Activated naive CD4-positive, alpha-beta T cell treated with anti-CD3 and anti-CD28 coated beads for 36 hours (primary cell): ENCODE measurements at regions of chr4 and their contacts with region 1.

Region 1: GRCh38 chr4:51842554-51843308 is at the start of gene DCUN1D4:
- DNase-seq: peak; percentile 99
- H3K4me3 Mint-ChIP-seq: peak within 1 kb of the TSS; percentile 91
- H3K27ac Mint-ChIP-seq: peak within 1 kb of the TSS; percentile 87
- H3K4me1 Mint-ChIP-seq: peaks cover 15% of the 10 kb centered on the region
- H3K27me3 Mint-ChIP-seq: no peaks in the 10 kb centered on the region
- total RNA-seq, gene DCUN1D4: 27.7 to 28.2 TPM

Region 2: GRCh38 chr4:51831133-51831532 is 11.6 kb before region 1 on chr4:
- CTCF ChIA-PET with region 1: interaction called, 13 read pairs
- intact Hi-C with region 1: no loop called
- DNase-seq: peak; percentile 84
- H3K4me3 Mint-ChIP-seq: no peak overlapping the region
- H3K27ac Mint-ChIP-seq: no peak overlapping the region
- H3K4me1 Mint-ChIP-seq: no peaks in the 10 kb centered on the region
- H3K27me3 Mint-ChIP-seq: peaks cover 6% of the 10 kb centered on the region

Region 3: GRCh38 chr4:51853027-51853682 is 10.4 kb after region 1 on chr4:
- CTCF ChIA-PET with region 1: no interaction called
- intact Hi-C with region 1: loop called (anchors 1 kb)
- DNase-seq: no peak
- H3K4me3 Mint-ChIP-seq: no peak overlapping the region
- H3K27ac Mint-ChIP-seq: no peak overlapping the region
- H3K4me1 Mint-ChIP-seq: peaks cover 45% of the 10 kb centered on the region
- H3K27me3 Mint-ChIP-seq: no peaks in the 10 kb centered on the region

Region 4: DNA sequence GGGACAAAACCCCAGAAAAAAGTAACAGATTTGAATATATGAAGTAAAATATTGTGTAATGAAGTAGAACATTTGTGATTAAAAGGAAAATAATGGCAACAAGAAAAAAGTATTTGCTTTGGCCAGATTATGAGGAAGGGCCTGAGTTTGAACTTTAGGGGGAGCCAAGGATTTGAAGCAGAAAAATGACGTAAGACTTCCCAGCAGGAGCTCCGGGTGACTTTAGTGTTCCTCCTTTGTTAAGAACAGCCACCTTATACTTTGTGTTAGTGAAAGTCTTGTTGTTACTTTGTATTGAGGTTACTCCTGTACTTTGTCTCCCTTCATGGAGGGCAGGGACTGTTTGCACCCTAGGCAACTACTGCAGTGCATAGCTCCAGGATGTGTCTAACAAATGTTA is 41.3 kb after region 1 on chr4:
- CTCF ChIA-PET with region 1: no interaction called
- intact Hi-C with region 1: no loop called
- DNase-seq: no peak
- H3K4me3 Mint-ChIP-seq: no peak overlapping the region
- H3K27ac Mint-ChIP-seq: no peak overlapping the region
- H3K4me1 Mint-ChIP-seq: no peaks in the 10 kb centered on the region
- H3K27me3 Mint-ChIP-seq: no peaks in the 10 kb centered on the region

Region 5: DNA sequence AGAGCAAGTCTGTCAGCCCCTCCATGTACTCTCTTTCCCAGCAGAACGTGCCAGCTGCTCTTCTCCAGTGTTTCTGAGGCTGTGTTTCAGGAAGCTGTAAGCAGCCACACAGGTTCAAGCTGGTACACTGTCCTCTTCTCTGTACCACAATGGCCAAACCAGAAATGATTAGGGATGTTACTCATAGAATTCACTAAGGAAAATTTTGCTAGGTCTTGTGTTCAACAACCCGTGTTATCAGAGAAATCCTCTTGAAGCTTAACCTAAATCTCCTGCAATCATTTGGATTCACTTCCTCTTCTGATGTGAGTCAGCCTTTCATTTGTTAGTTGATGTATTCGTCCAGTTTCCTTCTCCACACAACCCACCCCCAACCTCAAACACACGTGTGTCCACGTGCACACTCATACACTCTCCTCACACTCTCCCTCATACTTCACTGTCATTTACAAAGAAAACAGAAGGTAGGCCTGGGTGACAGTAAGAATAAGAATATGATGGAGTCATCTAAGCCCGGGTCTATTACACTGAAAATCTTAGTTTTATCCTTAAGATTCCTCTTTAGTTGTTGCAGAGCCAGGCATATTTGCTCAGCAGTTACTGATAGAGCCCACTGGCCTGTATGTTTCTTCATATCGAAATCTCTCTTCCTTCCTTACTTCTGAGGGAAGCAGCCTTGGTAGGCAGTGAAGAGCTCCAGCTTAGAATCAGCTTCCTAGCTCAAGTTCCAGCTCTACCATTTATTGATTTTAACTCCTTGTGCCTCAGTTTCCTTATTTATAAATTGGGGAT is 63.6 kb after region 1 on chr4:
- CTCF ChIA-PET with region 1: no interaction called
- intact Hi-C with region 1: loop called (anchors 2 kb)
- DNase-seq: no peak
- H3K4me3 Mint-ChIP-seq: no peak overlapping the region
- H3K27ac Mint-ChIP-seq: no peak overlapping the region
- H3K4me1 Mint-ChIP-seq: peaks cover 2% of the 10 kb centered on the region
- H3K27me3 Mint-ChIP-seq: no peaks in the 10 kb centered on the region

Region 6: DNA sequence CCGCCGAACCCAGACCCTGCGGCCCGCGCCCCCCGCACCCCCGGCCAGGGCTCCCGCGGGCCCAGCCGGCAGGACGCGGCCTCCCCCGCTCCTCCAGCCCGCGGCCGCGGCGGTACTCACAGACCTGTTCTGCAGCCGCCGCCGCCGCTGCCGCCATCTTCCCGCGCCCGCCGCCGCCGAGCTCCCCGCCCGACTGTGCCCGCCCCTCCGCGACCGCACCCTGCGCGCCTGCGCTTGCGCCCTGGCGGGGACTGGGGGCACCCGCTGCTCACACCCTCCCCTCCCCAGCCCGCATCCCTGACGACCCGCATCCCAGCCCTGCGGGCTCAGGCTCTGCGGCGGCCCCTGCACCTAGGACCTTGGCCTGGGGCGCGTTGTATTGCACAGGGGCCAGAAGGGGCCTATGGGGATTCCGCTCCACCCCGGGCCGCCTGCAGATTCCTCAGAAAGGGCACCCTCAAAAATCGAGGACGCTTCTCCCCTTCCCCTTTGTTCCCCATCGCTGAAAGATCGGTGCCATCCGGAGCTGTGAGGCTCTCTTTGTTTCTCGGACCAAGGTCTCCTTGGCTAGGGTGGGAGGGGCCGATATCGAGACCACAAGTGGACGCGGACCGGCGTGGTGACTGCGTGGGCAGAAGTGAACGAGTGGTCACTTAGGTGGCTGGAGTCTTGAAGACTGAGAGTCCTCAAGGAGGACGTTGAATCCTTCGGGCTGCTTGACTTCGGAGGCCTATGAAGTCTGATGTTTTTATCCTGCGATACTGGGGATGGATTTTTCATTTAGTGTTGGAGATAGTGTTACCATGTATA is 195.6 kb after region 1 on chr4 and contains the start of gene SGCB:
- CTCF ChIA-PET with region 1: no interaction called
- intact Hi-C with region 1: loop called (anchors 1 kb)
- DNase-seq: peak; percentile 66
- H3K4me3 Mint-ChIP-seq: peak within 1 kb of the TSS; percentile 79
- H3K27ac Mint-ChIP-seq: no peak within 1 kb of the TSS
- H3K4me1 Mint-ChIP-seq: peaks cover 20% of the 10 kb centered on the region
- H3K27me3 Mint-ChIP-seq: peaks cover 13% of the 10 kb centered on the region
- total RNA-seq, gene SGCB: 7.9 to 8.5 TPM